B cell (primary cell): ENCODE measurements at regions of chr13 and their contacts with region 1.

Region 1: GRCh38 chr13:97986835-97987234 is 33.4 kb downstream of the IPO5 start:
- DNase-seq: peak; percentile 71
- ATAC-seq: peak; percentile 73
- H3K4me3 ChIP-seq: no peak overlapping the region
- H3K4me3 Mint-ChIP-seq: no peak overlapping the region
- H3K27ac ChIP-seq: no peak overlapping the region
- H3K27ac Mint-ChIP-seq: peak overlapping the region; percentile 57
- H3K4me1 ChIP-seq: peaks cover 6 to 7% of the 10 kb centered on the region in 2 donors
- H3K4me1 Mint-ChIP-seq: peaks cover 7% of the 10 kb centered on the region
- H3K27me3 ChIP-seq: no peaks in the 10 kb centered on the region
- H3K27me3 Mint-ChIP-seq: no peaks in the 10 kb centered on the region
- CTCF ChIP-seq: no peak

Region 2: DNA sequence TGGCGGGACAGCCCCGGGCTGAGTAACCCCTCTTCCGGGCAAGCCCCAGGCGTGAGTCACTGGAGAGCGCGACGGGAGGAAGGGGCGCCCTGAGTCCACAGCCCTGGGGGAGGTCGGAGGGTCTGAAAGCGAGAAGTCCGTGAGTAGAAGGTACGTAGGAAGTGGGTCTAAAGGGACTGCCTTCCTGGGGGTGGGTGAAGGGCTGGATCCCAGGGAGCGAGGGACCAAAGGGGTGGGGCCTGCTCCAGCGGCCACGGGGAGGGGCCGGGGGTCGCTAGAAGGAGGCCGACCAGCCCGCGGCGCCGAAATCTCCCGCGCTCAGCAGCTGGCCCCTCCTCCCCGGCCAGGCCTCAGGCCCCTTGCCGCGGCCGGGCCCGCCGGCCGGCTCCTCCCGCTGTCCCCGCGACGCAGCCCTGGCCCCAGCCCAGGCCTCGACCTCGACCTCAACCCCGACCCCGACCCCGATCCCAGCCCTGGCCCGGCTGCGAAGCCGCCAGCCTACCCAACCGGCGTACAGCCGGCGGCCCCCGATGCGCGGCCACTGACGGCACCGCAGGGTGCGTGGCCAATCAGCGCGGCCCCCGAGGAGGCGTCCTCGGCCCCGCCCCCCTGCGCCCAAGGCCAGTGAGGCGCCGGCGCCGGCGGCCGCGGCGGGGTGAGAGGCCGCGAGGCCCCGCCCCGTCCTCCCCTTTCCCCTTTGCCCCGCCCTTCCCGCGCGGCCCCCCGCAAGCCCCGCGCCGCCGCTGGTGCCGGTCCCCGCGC is 10.8 kb before region 1 on chr13:
- CTCF ChIA-PET with region 1: no interaction called
- POLR2A ChIA-PET with region 1: no interaction called
- intact Hi-C with region 1: loop called (anchors 1 kb)
- DNase-seq: peak; percentile 93
- ATAC-seq: peak; percentile 92
- H3K4me3 ChIP-seq: peak overlapping the region; percentile 44 to 87 (median 84)
- H3K4me3 Mint-ChIP-seq: peak overlapping the region; percentile 92
- H3K27ac ChIP-seq: peak overlapping the region; percentile 61 to 92
- H3K27ac Mint-ChIP-seq: peak overlapping the region; percentile 91
- H3K4me1 ChIP-seq: peaks cover 14 to 20% of the 10 kb centered on the region in 2 donors
- H3K4me1 Mint-ChIP-seq: peaks cover 30% of the 10 kb centered on the region
- H3K27me3 ChIP-seq: no peaks in the 10 kb centered on the region
- H3K27me3 Mint-ChIP-seq: peaks cover 9% of the 10 kb centered on the region
- CTCF ChIP-seq: no peak